GM12878 (cell line): ENCODE measurements at regions of chr11 and their contacts with region 1.

Region 1: DNA sequence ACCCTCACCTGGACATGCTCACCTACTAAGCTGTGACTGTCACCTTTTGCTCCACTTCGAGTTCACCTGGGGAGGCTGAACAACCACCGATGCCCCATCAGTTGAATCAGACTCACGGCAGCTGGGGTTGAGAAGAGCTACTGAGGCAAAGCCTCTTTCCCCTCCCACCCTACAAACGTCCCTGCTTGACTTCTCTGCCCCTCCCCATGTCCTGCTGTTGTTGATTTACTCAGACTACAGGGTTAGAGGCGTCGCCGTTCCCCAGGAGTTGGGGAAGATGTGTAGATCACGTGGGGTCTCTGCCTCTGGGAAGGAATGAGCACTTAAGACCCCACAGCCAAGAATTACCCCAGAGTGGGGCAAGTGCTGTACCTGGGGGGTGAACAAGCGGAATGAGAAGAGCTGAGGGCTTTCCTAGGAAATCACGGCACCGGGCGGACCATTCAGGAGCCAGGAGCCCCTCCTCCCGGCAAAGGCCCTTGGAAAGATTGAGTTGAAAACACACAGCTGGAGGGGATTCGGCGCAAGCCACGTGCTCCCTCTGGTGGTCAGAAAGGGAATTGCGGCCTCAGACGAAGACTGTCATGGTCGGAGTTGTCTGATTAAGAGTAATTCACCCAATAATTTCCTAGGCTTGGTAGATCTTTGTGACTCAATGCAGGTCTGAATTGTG is 7.0 kb downstream of the FXYD2 start:
- DNase-seq: peak; percentile 93
- ATAC-seq: peak; percentile 47
- H3K4me3 ChIP-seq: no peak overlapping the region
- H3K27ac ChIP-seq: peak overlapping the region; percentile 87
- H3K4me1 ChIP-seq: peaks cover 55% of the 10 kb centered on the region
- H3K27me3 ChIP-seq: no peaks in the 10 kb centered on the region
- CTCF ChIP-seq: peak; percentile 98 to 100 (median 99)
- EP300 ChIP-seq: no peak; a peak in 1 of 4 replicates
- POLR2A ChIP-seq: peak; percentile 4; the same call in 1 of the 2 replicates
- RAD21 ChIP-seq: peak; percentile 95

Region 2: GRCh38 chr11:117443266-117444195 is 374.0 kb before region 1 on chr11:
- CTCF ChIA-PET with region 1: interaction called, 16 read pairs
- POLR2A ChIA-PET with region 1: no interaction called
- RAD21 ChIA-PET with region 1: interaction called, 6 read pairs
- SMC1A ChIA-PET with region 1: interaction called, 4 read pairs
- in situ Hi-C with region 1: no loop called
- intact Hi-C with region 1: no loop called
- DNase-seq: no peak
- ATAC-seq: peak; percentile 91
- H3K4me3 ChIP-seq: no peak overlapping the region
- H3K27ac ChIP-seq: no peak overlapping the region
- H3K4me1 ChIP-seq: no peaks in the 10 kb centered on the region
- H3K27me3 ChIP-seq: no peaks in the 10 kb centered on the region; a peak in 1 of 4 replicates
- CTCF ChIP-seq: peak; percentile 35 to 76 (median 58); a peak in 4 of 6 replicates
- EP300 ChIP-seq: no peak
- POLR2A ChIP-seq: no peak
- RAD21 ChIP-seq: peak; percentile 83

Region 3: DNA sequence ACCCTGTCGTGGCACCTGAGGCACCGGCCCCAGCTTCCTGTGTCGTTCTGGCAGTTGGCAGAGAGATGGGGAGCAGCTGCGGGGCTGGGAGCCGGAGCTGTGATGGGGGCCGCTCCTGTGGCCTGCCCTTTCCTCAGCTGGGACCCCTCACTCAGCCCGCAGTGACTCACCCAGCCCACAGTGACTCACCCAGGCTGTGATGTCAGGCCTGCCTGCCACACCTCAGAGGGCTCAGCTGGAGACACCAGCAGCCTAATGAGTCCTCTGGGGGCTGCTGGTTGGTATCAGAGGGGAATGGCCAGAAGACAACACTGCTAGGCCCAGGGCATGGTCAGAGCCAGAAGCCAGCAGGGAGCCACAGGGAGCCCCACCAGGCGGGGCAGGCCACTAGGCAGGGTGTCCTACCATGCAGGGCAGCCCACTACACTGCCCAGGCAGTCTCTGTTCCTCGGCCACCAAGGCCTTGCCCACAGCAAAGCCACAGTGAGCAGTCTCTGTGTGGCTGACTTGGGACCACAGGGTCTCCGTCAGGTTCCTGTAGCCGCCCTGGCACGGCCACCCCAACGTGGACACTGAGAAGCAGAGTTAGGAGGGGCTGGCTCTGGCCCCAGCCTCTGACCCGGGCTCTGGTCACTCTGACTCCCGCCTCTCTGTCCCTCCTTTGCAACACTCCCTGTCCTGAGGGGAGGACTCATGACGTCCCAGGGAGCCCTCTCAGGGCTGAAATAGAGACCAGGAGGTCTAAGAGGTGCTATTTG is 11.3 kb after region 1 on chr11:
- CTCF ChIA-PET with region 1: interaction called, 28 read pairs
- POLR2A ChIA-PET with region 1: interaction called, 15 read pairs
- RAD21 ChIA-PET with region 1: interaction called, 49 read pairs
- SMC1A ChIA-PET with region 1: interaction called, 23 read pairs
- in situ Hi-C with region 1: no loop called
- intact Hi-C with region 1: no loop called
- DNase-seq: no peak
- ATAC-seq: peak; percentile 92
- H3K4me3 ChIP-seq: no peak overlapping the region
- H3K27ac ChIP-seq: no peak overlapping the region; the same call in 1 of the 2 replicates
- H3K4me1 ChIP-seq: peaks cover 14% of the 10 kb centered on the region
- H3K27me3 ChIP-seq: no peaks in the 10 kb centered on the region
- CTCF ChIP-seq: no peak
- EP300 ChIP-seq: peak; percentile 34 to 54; a peak in 2 of 4 replicates
- POLR2A ChIP-seq: 0 out of 2 replicates have a peak, but pooled peaks have one; percentile 19
- RAD21 ChIP-seq: no peak

Region 4: GRCh38 chr11:117941163-117941707 is 123.7 kb after region 1 on chr11:
- CTCF ChIA-PET with region 1: interaction called, 503 read pairs
- POLR2A ChIA-PET with region 1: interaction called, 14 read pairs
- RAD21 ChIA-PET with region 1: interaction called, 393 read pairs
- SMC1A ChIA-PET with region 1: interaction called, 183 read pairs
- in situ Hi-C with region 1: no loop called
- intact Hi-C with region 1: loop called (anchors 1 kb)
- DNase-seq: no peak
- ATAC-seq: no peak
- H3K4me3 ChIP-seq: no peak overlapping the region
- H3K27ac ChIP-seq: no peak overlapping the region
- H3K4me1 ChIP-seq: peaks cover 24% of the 10 kb centered on the region
- H3K27me3 ChIP-seq: no peaks in the 10 kb centered on the region
- CTCF ChIP-seq: no peak
- EP300 ChIP-seq: no peak
- POLR2A ChIP-seq: no peak
- RAD21 ChIP-seq: no peak

Region 5: GRCh38 chr11:118046051-118046963 is 228.8 kb after region 1 on chr11:
- CTCF ChIA-PET with region 1: interaction called, 257 read pairs
- POLR2A ChIA-PET with region 1: no interaction called
- RAD21 ChIA-PET with region 1: interaction called, 183 read pairs
- SMC1A ChIA-PET with region 1: interaction called, 98 read pairs
- in situ Hi-C with region 1: no loop called
- intact Hi-C with region 1: no loop called
- DNase-seq: peak; percentile 44
- ATAC-seq: peak; percentile 88
- H3K4me3 ChIP-seq: no peak overlapping the region
- H3K27ac ChIP-seq: no peak overlapping the region
- H3K4me1 ChIP-seq: peaks cover 20% of the 10 kb centered on the region
- H3K27me3 ChIP-seq: no peaks in the 10 kb centered on the region
- CTCF ChIP-seq: no peak
- EP300 ChIP-seq: no peak
- POLR2A ChIP-seq: no peak
- RAD21 ChIP-seq: no peak

Region 6: GRCh38 chr11:118435893-118436624 is 618.6 kb after region 1 on chr11 and contains the start of gene KMT2A:
- CTCF ChIA-PET with region 1: interaction called, 4 read pairs
- POLR2A ChIA-PET with region 1: no interaction called
- RAD21 ChIA-PET with region 1: no interaction called
- SMC1A ChIA-PET with region 1: no interaction called
- in situ Hi-C with region 1: no loop called
- intact Hi-C with region 1: loop called (anchors 10 kb)
- DNase-seq: no peak
- ATAC-seq: peak; percentile 54
- H3K4me3 ChIP-seq: peak within 1 kb of the TSS; percentile 94
- H3K27ac ChIP-seq: peak within 1 kb of the TSS; percentile 94
- H3K4me1 ChIP-seq: peaks cover 5% of the 10 kb centered on the region; the same call in 1 of the 2 replicates
- H3K27me3 ChIP-seq: no peaks in the 10 kb centered on the region
- CTCF ChIP-seq: no peak
- EP300 ChIP-seq: no peak
- POLR2A ChIP-seq: peak; percentile 74
- RAD21 ChIP-seq: no peak
- polyA plus RNA-seq, gene KMT2A: 6.1 to 7.4 TPM